Activated T-helper 1 cell treated with anti-CD3 and anti-CD28 coated beads, Interleukin-12 subunit alpha, Interleukin-12 subunit beta, Interleukin-2, Interleukin-4 antibody, amounts not matched to agents 30 ng/mL and 10 ng/mL and 1 ng/mL, durations not matched to agents 14 hours and 24 hours and 36 hours (primary cell): ENCODE measurements at regions of chr3 and their contacts with region 1.

Region 1: DNA sequence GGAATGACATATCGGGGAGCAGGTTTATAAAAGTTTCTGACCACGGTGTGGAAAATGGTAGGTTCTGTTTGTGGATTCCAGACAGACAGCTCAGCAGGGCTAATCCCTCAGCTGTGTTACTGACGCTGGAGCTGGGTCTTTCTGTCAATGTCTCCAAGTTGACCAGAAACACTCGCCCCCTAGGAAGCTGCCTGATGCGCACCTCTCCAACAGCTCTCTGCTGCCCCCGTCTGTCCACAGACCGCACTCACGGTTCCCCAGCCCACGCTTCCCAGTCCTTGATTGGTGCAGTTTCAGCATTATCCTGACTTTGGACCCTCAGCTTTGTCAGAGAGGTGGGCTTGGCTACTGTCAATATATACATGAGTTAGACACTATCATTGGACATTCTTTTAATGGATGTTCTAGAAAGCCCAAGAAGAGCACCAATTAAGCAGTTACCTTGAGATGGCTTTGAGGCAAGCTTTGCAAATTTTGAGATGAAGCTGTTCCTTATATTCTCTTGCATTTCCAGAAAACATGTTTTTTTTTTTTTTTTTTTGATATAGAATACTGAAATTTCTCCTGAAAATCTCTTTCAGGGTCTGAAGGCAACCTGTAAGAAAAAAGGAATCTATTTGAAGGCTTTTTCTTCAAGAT is 98.9 kb upstream of the TBC1D5 start:
- DNase-seq: peak; percentile 49
- H3K4me3 Mint-ChIP-seq: no peak overlapping the region
- H3K27ac Mint-ChIP-seq: no peak overlapping the region
- H3K4me1 Mint-ChIP-seq: no peaks in the 10 kb centered on the region
- H3K27me3 Mint-ChIP-seq: peaks cover 4% of the 10 kb centered on the region

Region 2: GRCh38 chr3:15953841-15954240 is 1887.5 kb before region 1 on chr3:
- intact Hi-C with region 1: no loop called
- DNase-seq: no peak
- H3K4me3 Mint-ChIP-seq: no peak overlapping the region
- H3K27ac Mint-ChIP-seq: no peak overlapping the region
- H3K4me1 Mint-ChIP-seq: no peaks in the 10 kb centered on the region
- H3K27me3 Mint-ChIP-seq: no peaks in the 10 kb centered on the region

Region 3: DNA sequence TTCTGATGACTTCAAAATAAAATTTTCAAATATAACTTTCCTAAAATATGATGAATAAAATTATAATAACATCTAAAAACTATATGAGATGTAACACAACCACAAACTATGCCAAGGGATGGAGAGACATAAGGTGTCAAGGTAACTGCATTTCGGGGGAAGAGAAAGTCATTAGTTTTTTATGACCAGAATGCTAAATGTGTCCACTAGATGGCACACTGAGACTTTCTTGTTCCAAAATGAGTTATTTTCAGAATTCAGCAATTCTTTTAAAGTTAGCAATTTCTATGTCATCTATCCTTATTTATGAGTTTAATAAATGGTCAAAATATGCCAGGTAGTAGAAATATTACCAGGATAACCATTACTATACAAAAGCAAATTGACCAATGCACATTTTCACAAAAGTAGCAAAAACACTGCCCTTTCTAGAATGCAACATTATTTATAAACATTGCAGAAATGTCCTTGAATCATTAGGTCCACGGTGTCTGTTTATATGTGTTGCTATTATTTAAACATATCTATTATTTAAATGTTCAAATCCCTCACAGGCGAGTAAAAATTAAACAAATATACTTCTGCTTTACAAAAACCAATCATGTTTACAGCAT is 582.4 kb before region 1 on chr3:
- intact Hi-C with region 1: loop called (anchors 1 kb)
- DNase-seq: no peak
- H3K4me3 Mint-ChIP-seq: no peak overlapping the region
- H3K27ac Mint-ChIP-seq: no peak overlapping the region
- H3K4me1 Mint-ChIP-seq: no peaks in the 10 kb centered on the region
- H3K27me3 Mint-ChIP-seq: peaks cover 3% of the 10 kb centered on the region

Region 4: DNA sequence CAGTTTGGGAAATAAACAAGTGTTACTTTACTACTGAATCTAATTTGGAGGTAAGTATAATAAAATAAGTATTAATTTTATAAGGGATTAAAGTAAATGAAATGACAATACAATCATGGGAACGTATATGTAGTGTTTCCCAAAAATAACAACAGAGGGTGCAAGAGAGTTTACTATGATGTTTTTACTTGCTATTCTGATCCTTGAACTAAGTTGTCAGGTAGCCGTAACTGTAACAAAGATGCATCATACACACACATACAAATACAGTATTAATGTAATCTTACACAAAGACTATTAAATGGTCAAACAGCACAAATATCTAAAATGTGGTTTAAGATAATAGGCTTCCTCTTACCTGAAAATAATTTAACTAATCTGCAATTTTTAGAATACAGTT is 410.3 kb before region 1 on chr3:
- intact Hi-C with region 1: loop called (anchors 1 kb)
- DNase-seq: no peak
- H3K4me3 Mint-ChIP-seq: no peak overlapping the region
- H3K27ac Mint-ChIP-seq: no peak overlapping the region
- H3K4me1 Mint-ChIP-seq: no peaks in the 10 kb centered on the region
- H3K27me3 Mint-ChIP-seq: no peaks in the 10 kb centered on the region

Region 5: DNA sequence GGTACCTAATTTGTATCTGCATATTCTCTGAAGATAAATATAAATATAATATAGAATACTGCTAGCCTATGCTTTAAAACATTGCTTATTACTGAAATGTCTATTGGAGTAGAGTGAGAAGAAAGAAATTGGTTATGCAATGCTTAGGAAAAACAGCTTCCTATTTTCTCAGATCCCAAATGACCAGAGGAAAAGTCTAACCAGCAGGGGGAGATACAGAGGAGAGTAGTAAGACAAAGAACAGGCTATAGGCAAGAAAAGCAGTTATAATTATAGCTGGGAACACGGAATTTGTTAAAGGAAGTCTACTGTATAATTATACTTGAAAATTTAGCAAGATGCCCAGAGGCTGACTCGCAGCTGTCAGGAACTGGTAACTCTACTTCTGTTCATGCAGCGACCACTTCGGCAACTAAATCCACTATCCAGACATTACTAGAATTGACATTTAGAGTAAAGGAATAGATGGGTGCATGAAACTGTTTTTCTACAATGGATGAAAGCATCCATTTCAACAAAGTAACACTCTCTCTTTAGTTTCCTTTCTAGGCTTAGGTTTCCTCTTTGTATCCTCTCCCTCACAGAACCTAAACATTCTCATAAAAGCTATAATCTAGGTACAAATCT is 196.1 kb before region 1 on chr3:
- intact Hi-C with region 1: loop called (anchors 1 kb)
- DNase-seq: no peak
- H3K4me3 Mint-ChIP-seq: no peak overlapping the region
- H3K27ac Mint-ChIP-seq: no peak overlapping the region
- H3K4me1 Mint-ChIP-seq: no peaks in the 10 kb centered on the region
- H3K27me3 Mint-ChIP-seq: no peaks in the 10 kb centered on the region

Region 6: DNA sequence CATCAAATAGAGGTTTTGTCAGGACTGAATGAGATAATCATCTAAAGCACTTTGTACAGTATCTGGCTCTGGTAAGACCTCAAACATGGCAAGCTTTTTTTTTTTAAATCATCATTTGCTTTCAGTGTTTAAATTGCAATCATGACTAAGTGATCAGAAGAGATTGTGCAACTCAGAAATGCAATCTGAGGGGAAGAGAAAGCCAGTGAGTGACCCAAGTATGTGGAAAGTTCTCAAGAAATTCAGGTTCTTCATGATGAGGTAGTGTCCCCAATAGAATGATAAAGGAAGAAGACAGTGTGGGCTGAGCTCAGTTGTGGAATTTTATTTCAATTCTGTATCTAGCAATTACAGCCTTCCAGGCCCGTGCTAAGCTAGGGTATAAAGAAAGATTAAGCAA is 33.3 kb after region 1 on chr3:
- intact Hi-C with region 1: no loop called
- DNase-seq: no peak
- H3K4me3 Mint-ChIP-seq: no peak overlapping the region
- H3K27ac Mint-ChIP-seq: no peak overlapping the region
- H3K4me1 Mint-ChIP-seq: no peaks in the 10 kb centered on the region
- H3K27me3 Mint-ChIP-seq: peaks cover 7% of the 10 kb centered on the region